Naive thymus-derived CD8-positive, alpha-beta T cell (primary cell): ENCODE measurements at regions of chr17 and their contacts with region 1.

Region 1: GRCh38 chr17:76997981-76998531 is 129.9 kb downstream of the MGAT5B start:
- DNase-seq: peak in 9 of 10 donors; percentile 37 to 88 (median 68)
- ATAC-seq: peak; percentile 90 to 94
- H3K4me3 Mint-ChIP-seq: peak overlapping the region; percentile 40 to 81 (median 70)
- H3K27ac Mint-ChIP-seq: peak overlapping the region; percentile 88 to 98 (median 94)
- H3K4me1 Mint-ChIP-seq: peaks cover 25 to 65% (median 56%) of the 10 kb centered on the region in 4 donors
- H3K27me3 Mint-ChIP-seq: no peaks in the 10 kb centered on the region

Region 2: GRCh38 chr17:76982408-76983074 is 15.5 kb before region 1 on chr17:
- POLR2A ChIA-PET with region 1: interaction called, 11 read pairs
- DNase-seq: peak in 2 of 10 donors; percentile 50 to 54
- ATAC-seq: peak; percentile 78 to 79
- H3K4me3 Mint-ChIP-seq: peak overlapping the region in 9 of 10 donors; percentile 24 to 72 (median 33)
- H3K27ac Mint-ChIP-seq: peak overlapping the region in 9 of 10 donors; percentile 44 to 95 (median 89)
- H3K4me1 Mint-ChIP-seq: peaks cover 6 to 20% (median 16%) of the 10 kb centered on the region in 4 donors
- H3K27me3 Mint-ChIP-seq: no peaks in the 10 kb centered on the region